RWPE1 (cell line): ENCODE measurements at regions of chr15 and their contacts with region 1.

Region 1: GRCh38 chr15:29656636-29657475 is 165.4 kb downstream of the TJP1 start:
- DNase-seq: peak; percentile 46
- H3K27ac ChIP-seq: no peak overlapping the region
- CTCF ChIP-seq: peak; percentile 81

Region 2: GRCh38 chr15:29440541-29440940 is 216.3 kb before region 1 on chr15:
- CTCF ChIA-PET with region 1: no interaction called
- POLR2A ChIA-PET with region 1: no interaction called
- DNase-seq: no peak
- H3K27ac ChIP-seq: no peak overlapping the region
- CTCF ChIP-seq: no peak

Region 3: GRCh38 chr15:30073915-30074314 is 417.1 kb after region 1 on chr15:
- CTCF ChIA-PET with region 1: interaction called, 11 read pairs
- POLR2A ChIA-PET with region 1: no interaction called
- DNase-seq: no peak
- H3K27ac ChIP-seq: peak overlapping the region; percentile 7; the same call in 1 of the 2 replicates
- CTCF ChIP-seq: no peak